ENCODE measurements at regions of chr2 and their contacts with region 1.

Region 1: DNA sequence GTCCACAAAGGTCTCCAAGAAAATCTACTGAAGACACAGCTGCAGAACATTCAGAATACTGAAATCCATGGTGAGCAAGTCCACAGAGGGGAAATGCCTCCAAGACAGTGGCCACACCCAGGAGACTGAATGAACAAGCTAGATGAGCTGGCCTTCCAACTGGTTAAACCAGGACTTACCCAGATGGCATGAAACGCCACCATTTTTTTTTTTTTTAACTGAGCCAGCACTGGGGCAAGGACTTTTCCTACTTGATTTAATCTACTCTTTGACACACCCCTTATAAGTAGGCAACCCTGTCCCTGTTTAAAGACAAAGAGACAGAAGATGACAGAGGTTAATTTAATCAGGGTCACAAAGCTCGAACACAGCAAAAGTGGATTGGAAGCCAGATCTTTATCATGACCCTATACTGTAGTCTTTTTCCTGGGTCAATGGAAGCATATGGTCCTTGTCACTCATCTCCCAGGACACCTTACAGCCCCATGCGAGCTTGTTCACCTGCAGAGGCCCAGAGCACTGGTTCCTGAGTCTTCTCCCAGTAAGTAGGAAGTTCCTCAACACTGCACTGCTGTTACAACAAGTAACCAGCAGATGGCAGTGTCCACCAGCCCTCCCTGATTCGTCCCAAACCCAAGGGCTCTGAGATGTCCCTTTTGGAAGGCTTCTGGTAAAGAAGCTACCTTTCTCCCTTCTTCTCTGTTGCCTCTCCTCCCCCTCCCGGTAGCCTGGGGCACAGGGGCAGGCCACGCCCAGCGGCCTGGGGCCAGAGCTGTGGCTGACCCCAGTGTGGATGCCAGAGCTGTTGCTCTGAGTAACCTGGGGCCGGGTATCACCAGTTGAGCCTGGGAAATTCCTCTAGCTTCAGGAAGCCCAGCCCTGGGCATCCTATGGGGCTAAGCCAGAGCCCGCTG is 5.6 kb upstream of the GDF7 start:
- DNase-seq: peak in 8 of 9 donors; percentile 35 to 71 (median 62)
- ATAC-seq: peak; percentile 88
- H3K4me3 ChIP-seq: no peak overlapping the region
- H3K4me3 Mint-ChIP-seq: no peak overlapping the region
- H3K27ac ChIP-seq: no peak overlapping the region
- H3K27ac Mint-ChIP-seq: no peak overlapping the region
- H3K4me1 ChIP-seq: no peaks in the 10 kb centered on the region
- H3K4me1 Mint-ChIP-seq: peaks cover 2 to 15% (median 7%) of the 10 kb centered on the region in 7 donors
- H3K27me3 ChIP-seq: peaks cover 5 to 7% of the 10 kb centered on the region in 2 donors
- H3K27me3 Mint-ChIP-seq: peaks cover 52 to 80% (median 59%) of the 10 kb centered on the region in 5 donors

Region 2: DNA sequence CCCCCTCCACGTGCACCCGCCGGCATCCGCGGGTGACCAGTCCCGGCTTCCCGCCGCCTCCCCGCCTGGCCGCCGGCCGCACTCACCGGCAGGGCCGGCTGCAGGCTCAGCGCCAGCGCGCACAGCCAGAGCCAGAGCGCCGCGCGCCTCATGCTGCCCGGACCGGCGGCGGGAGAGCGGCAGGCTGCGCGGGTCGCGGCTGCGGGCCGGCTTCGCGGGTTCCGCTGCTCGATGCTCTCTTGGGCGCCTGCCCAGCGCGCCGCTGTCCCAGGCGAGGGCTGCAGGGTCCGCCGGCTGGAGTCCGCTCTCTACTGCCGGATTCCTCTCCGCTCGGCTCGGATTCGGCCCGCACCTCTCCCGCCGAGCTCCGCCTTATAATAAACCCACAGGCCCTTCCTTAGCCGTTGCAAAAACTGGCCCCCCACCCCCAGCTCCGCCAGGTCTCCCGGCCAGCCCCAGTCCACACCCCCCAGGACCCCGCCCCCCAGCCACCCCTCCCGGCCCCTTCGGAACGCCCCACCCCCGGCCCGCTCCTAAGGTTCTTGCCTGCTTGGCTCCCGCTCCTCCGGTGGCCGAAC is 436.5 kb before region 1 on chr2 and contains the start of gene SDC1:
- CTCF ChIA-PET with region 1: no interaction called
- POLR2A ChIA-PET with region 1: no interaction called
- intact Hi-C with region 1: no loop called
- DNase-seq: peak in 1 of 9 donors; percentile 37
- ATAC-seq: peak; percentile 11
- H3K4me3 ChIP-seq: no peak within 1 kb of the TSS
- H3K4me3 Mint-ChIP-seq: peak within 1 kb of the TSS; percentile 30 to 77 (median 59)
- H3K27ac ChIP-seq: no peak within 1 kb of the TSS
- H3K27ac Mint-ChIP-seq: no peak within 1 kb of the TSS
- H3K4me1 ChIP-seq: no peaks in the 10 kb centered on the region
- H3K4me1 Mint-ChIP-seq: peaks cover 0 to 5% (median 0%) of the 10 kb centered on the region in 7 donors
- H3K27me3 ChIP-seq: peaks cover 0 to 2% of the 10 kb centered on the region in 2 donors
- H3K27me3 Mint-ChIP-seq: peaks cover 48 to 70% (median 65%) of the 10 kb centered on the region in 5 donors
- total RNA-seq, gene SDC1: 0.12 to 0.37 (median 0.22) TPM in 3 of 5 experiments, not detected in the others

Region 3: DNA sequence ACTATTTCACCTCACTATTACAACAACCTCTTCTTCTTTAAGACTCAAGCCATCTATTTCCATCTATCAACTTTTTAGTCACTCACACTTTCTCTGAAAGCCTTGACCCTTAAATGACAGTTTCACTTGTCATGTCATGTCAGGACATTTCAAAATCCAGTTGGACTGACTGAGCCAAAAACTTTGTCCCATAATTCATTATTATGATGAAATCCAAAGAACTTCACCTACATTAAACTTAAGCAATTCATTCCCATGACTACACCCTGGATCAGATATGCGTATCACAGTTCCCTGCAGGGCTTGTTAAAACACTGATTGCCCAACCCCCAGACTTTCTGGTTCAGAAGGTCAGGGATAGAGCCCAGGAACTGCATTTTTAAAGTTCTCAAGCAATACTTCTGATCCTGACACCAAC is 135.1 kb after region 1 on chr2:
- CTCF ChIA-PET with region 1: no interaction called
- POLR2A ChIA-PET with region 1: no interaction called
- intact Hi-C with region 1: no loop called
- DNase-seq: no peak
- ATAC-seq: no peak
- H3K4me3 ChIP-seq: no peak overlapping the region
- H3K4me3 Mint-ChIP-seq: no peak overlapping the region
- H3K27ac ChIP-seq: no peak overlapping the region
- H3K27ac Mint-ChIP-seq: no peak overlapping the region
- H3K4me1 ChIP-seq: no peaks in the 10 kb centered on the region
- H3K4me1 Mint-ChIP-seq: peaks cover 0 to 31% (median 21%) of the 10 kb centered on the region in 7 donors
- H3K27me3 ChIP-seq: no peaks in the 10 kb centered on the region
- H3K27me3 Mint-ChIP-seq: no peaks in the 10 kb centered on the region

Region 4: DNA sequence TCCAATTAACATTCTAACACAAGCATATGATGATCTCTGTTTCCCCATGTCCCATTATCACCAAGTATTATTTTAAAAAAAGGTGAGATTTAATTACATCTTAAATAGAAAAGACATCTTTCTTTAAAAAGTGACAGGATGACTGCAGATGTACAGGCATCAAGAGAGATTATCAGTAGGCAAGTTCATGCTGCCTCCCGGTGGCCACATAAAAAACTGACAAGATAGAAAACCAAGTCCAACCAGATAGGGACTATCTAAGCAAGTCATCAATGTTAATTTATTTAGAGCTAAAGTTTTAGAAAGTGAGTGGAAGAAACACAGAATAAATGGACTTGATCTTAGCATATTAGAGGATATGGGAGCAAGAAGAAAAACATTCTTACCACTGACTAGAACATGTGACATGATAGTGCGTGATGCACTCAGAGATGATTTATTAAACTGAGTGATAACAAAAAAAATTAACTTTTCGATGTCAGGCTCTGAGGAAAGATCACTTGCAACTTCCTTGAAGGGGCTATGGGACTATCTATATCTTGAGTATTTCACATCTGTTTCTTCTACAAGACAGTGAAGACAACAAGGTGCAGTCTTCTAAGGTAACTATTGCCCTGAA is 457.1 kb after region 1 on chr2:
- CTCF ChIA-PET with region 1: no interaction called
- POLR2A ChIA-PET with region 1: no interaction called
- intact Hi-C with region 1: loop called in 1 of 2 experiments (anchors 1 kb)
- DNase-seq: peak in 1 of 9 donors; percentile 0
- ATAC-seq: no peak
- H3K4me3 ChIP-seq: no peak overlapping the region
- H3K4me3 Mint-ChIP-seq: no peak overlapping the region
- H3K27ac ChIP-seq: no peak overlapping the region
- H3K27ac Mint-ChIP-seq: no peak overlapping the region
- H3K4me1 ChIP-seq: no peaks in the 10 kb centered on the region
- H3K4me1 Mint-ChIP-seq: no peaks in the 10 kb centered on the region
- H3K27me3 ChIP-seq: no peaks in the 10 kb centered on the region
- H3K27me3 Mint-ChIP-seq: peaks cover 3 to 28% (median 13%) of the 10 kb centered on the region in 5 donors

Region 5: GRCh38 chr2:21317131-21317530 is 655.8 kb after region 1 on chr2:
- CTCF ChIA-PET with region 1: no interaction called
- POLR2A ChIA-PET with region 1: no interaction called
- intact Hi-C with region 1: loop called (anchors 5 to 10 kb)
- DNase-seq: no peak
- ATAC-seq: peak; percentile 38
- H3K4me3 ChIP-seq: no peak overlapping the region
- H3K4me3 Mint-ChIP-seq: no peak overlapping the region
- H3K27ac ChIP-seq: no peak overlapping the region
- H3K27ac Mint-ChIP-seq: no peak overlapping the region
- H3K4me1 ChIP-seq: no peaks in the 10 kb centered on the region
- H3K4me1 Mint-ChIP-seq: peaks cover 0 to 1% (median 0%) of the 10 kb centered on the region in 7 donors
- H3K27me3 ChIP-seq: no peaks in the 10 kb centered on the region
- H3K27me3 Mint-ChIP-seq: peaks cover 0 to 12% (median 0%) of the 10 kb centered on the region in 5 donors